ENCODE measurements at regions of chr15 and their contacts with region 1.

Region 1: GRCh38 chr15:62254137-62254934 is 89.3 kb upstream of the C2CD4B start:
- DNase-seq: peak; percentile 34 to 92
- H3K4me3 ChIP-seq: no peak overlapping the region
- H3K27ac ChIP-seq: no peak overlapping the region
- H3K4me1 ChIP-seq: peaks cover 0 to 4% (median under 1%) of the 10 kb centered on the region in 4 experiments; a peak in 1 of 7 replicates
- H3K27me3 ChIP-seq: no peaks in the 10 kb centered on the region
- CTCF ChIP-seq: peak; percentile 69 to 81 (median 75)
- EP300 ChIP-seq: no peak
- POLR2A ChIP-seq: no peak
- RAD21 ChIP-seq: peak; percentile 66 to 78

Region 2: GRCh38 chr15:62071711-62072308 is 182.5 kb before region 1 on chr15:
- CTCF ChIA-PET with region 1: interaction called, 13 read pairs
- POLR2A ChIA-PET with region 1: no interaction called
- DNase-seq: no peak
- H3K4me3 ChIP-seq: no peak overlapping the region
- H3K27ac ChIP-seq: no peak overlapping the region
- H3K4me1 ChIP-seq: peaks cover 3 to 7% (median 4%) of the 10 kb centered on the region in 4 experiments; a peak in 4 of 7 replicates
- H3K27me3 ChIP-seq: peaks cover 13 to 30% (median 24%) of the 10 kb centered on the region in 4 experiments
- CTCF ChIP-seq: peak in 2 of 3 experiments; percentile 17 to 50; a peak in 2 of 4 replicates
- EP300 ChIP-seq: no peak
- POLR2A ChIP-seq: no peak
- RAD21 ChIP-seq: peak; percentile 40 to 42

Region 3: GRCh38 chr15:62125773-62126172 is 128.6 kb before region 1 on chr15:
- CTCF ChIA-PET with region 1: interaction called, 11 read pairs
- POLR2A ChIA-PET with region 1: no interaction called
- DNase-seq: no peak
- H3K4me3 ChIP-seq: no peak overlapping the region
- H3K27ac ChIP-seq: no peak overlapping the region
- H3K4me1 ChIP-seq: no peaks in the 10 kb centered on the region
- H3K27me3 ChIP-seq: peaks cover 0 to 1% (median 0%) of the 10 kb centered on the region in 4 experiments; a peak in 1 of 7 replicates
- CTCF ChIP-seq: peak in 2 of 3 experiments; percentile 7 to 14; a peak in 2 of 4 replicates
- EP300 ChIP-seq: no peak
- POLR2A ChIP-seq: no peak
- RAD21 ChIP-seq: no peak

Region 4: GRCh38 chr15:62241135-62241770 is 13.1 kb before region 1 on chr15:
- CTCF ChIA-PET with region 1: interaction called, 229 read pairs
- POLR2A ChIA-PET with region 1: no interaction called
- DNase-seq: peak; percentile 31 to 81
- H3K4me3 ChIP-seq: no peak overlapping the region
- H3K27ac ChIP-seq: no peak overlapping the region
- H3K4me1 ChIP-seq: peaks cover 0 to 2% (median 0%) of the 10 kb centered on the region in 4 experiments; a peak in 1 of 7 replicates
- H3K27me3 ChIP-seq: no peaks in the 10 kb centered on the region
- CTCF ChIP-seq: peak; percentile 76 to 88 (median 88)
- EP300 ChIP-seq: no peak
- POLR2A ChIP-seq: no peak
- RAD21 ChIP-seq: peak; percentile 26 to 61